ENCODE measurements at regions of chr14 and their contacts with region 1.

Region 1: DNA sequence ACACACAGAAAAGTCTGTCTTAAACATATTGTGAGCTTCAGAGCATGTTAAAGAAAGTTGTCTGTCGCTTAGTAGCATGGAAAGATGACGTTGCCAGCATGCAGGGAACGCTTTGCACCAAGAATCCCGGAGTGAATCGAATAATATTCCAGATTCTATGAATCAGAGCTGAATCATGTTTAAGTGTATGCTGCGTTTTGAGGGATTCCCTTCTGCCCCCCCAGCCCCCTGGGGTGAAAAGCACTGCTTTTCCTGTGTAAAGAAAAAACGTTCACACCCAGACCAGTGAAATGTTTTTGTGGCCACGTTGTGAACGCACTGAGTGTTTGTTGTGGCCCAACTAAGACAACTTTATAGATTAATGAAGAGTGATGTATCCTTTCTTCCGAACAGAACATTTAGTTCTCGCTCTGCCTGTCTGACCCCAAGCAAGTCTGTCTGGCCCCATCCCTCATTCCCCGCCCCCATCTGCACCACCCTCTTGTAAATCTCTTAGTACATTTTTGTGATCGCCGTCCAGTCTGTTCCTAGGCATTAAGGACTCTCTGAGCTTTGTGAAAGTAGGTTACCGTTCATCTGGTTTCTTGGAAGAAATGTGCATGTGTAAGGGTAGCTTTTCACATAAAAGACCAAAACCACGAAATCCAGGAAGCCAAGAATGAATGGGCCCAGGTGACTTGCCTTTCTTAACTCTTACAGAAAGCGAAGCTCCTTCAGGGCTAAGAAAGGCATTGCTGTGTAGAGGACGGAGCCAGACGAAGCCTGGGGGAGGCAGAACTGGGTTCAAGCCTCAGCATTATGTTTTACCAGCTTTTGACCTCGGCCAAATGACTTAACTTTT is 103.0 kb downstream of the SAMD4A start:
- DNase-seq: peak; percentile 56
- ATAC-seq: peak; percentile 85
- H3K4me3 Mint-ChIP-seq: no peak overlapping the region
- H3K27ac Mint-ChIP-seq: peak overlapping the region; percentile 6
- H3K4me1 Mint-ChIP-seq: peaks cover 39% of the 10 kb centered on the region
- H3K27me3 Mint-ChIP-seq: peaks cover 75% of the 10 kb centered on the region

Region 2: GRCh38 chr14:54650331-54650791 is 19.6 kb before region 1 on chr14:
- CTCF ChIA-PET with region 1: no interaction called
- DNase-seq: no peak
- ATAC-seq: no peak
- H3K4me3 Mint-ChIP-seq: no peak overlapping the region
- H3K27ac Mint-ChIP-seq: no peak overlapping the region
- H3K4me1 Mint-ChIP-seq: peaks cover 7% of the 10 kb centered on the region
- H3K27me3 Mint-ChIP-seq: peaks cover 46% of the 10 kb centered on the region

Region 3: DNA sequence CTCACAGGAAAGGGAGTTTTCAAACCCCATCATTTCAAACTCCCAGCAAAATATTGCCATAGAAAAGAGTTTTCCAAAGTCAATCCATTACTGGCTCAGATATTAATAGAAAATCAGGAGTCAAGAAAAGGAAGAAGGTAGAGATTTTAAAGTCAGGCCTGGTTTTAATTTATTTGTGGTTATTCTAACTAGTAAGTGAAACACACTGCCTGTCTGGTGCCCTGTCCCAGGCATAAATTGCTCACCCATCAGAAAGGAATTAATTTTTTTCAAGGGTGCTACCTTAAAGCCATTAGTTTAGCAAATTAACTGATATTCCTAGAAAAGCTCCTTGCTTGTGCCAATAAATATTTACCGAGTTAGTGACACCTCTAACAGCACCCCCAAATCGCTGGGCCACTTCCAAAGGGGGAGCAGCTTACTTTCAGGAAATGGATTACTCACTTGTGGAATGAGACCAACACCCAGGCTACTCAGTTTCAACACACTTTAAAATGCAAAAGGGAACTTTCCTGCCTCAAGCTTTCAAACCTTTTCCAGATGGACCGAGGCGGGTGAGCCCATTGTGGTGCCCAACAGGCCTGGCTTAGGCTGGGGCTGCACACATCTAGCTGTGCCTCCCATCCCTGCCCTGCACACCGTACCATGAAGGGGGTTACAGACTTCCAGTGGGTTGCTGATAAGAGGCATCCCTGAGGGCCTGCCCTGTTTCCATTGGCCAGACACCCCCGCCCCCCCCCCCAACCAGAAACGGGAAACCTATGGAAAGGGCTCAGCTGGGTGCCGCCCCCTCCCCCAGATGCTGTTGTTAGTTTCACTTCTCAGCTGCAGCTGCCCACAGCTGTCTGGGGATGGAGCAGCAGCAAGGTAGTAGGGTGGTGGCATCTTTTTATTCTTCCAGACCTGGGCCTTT is 14.2 kb after region 1 on chr14:
- CTCF ChIA-PET with region 1: interaction called, 12 read pairs
- DNase-seq: no peak
- ATAC-seq: no peak
- H3K4me3 Mint-ChIP-seq: no peak overlapping the region
- H3K27ac Mint-ChIP-seq: no peak overlapping the region
- H3K4me1 Mint-ChIP-seq: peaks cover 22% of the 10 kb centered on the region
- H3K27me3 Mint-ChIP-seq: peaks cover 72% of the 10 kb centered on the region

Region 4: GRCh38 chr14:54691525-54692283 is 21.8 kb after region 1 on chr14:
- CTCF ChIA-PET with region 1: interaction called, 14 read pairs
- DNase-seq: peak; percentile 72
- ATAC-seq: peak; percentile 75
- H3K4me3 Mint-ChIP-seq: no peak overlapping the region
- H3K27ac Mint-ChIP-seq: no peak overlapping the region
- H3K4me1 Mint-ChIP-seq: peaks cover 13% of the 10 kb centered on the region
- H3K27me3 Mint-ChIP-seq: peaks cover 78% of the 10 kb centered on the region

Measured in activated CD8-positive, alpha-beta memory T cell treated with anti-CD3 and anti-CD28 coated beads, Interleukin-2, amount 10 ng/mL, durations not matched to agents 7 days and 5 days (primary cell).